GM10248 (cell line): ENCODE measurements at regions of chr3 and their contacts with region 1.

Region 1: DNA sequence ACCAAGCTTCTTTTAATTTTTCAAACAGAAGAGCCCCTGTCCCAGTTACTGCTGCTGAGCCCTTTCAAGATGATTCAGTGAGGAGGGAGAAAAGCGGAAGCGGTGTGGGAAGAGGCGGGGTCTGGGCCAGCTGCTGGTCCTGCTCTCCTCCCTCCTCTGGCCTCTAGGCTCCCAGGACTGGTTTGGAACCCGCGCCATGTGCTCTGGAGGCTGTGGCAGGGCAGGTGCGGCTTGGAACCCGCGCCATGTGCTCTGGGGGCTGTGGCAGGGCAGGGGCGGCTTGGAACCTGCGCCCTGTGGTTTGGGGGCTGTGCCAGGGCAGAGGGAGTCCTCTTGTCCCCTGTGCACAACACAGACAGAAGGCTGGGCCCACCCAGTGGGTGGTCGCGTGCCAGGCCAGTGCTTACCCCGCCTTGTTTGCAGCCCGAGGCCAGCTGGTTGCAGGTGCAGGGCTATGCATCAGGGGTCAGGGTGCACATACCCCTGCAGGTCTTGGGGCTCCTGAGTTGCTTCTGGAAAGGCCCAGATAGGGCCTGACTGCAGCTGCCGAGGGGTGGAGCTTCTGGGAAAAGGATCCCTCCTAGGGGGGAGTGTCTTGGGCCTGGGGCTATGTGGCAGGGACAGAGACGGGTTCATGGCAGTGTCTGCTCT is 12.2 kb downstream of the ALG1L2 start:
- DNase-seq: peak; percentile 54
- CTCF ChIP-seq: no peak

Region 2: DNA sequence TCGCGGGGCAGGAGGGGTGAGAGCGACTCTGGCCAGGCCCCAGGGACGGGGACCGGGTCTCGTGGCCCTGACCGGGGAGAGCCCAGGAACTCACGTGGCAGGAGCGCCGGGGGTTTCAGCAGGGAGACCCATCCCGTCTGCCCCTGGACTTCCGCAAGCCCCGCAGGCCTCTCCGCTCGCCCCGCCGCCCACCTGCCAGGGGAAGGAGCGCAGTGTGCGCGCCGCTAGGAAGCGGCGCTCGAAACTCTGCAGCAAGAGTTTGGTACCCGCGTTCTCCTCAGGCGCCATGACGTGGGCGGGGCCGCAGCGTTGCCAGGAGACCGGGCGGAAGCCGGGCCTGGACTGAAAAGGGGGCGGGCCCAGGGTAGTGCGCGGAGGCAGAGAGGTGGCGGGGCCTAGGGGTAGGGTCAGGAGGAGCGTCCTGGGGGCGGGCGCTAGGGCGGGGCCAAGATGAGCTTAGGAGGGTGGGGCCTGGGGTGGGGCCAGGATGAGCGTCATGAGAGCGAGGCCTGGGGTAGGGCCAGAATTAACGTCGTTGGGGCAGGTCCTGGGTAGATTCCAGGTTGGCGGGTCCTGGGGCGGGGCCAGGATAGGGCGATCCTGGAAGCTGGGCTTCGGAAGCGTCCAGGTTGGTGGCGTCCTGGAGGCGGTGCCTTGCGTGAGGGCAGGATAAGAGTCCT is 17.5 kb after region 1 on chr3:
- CTCF ChIA-PET with region 1: interaction called, 46 read pairs
- POLR2A ChIA-PET with region 1: no interaction called
- DNase-seq: peak; percentile 90
- CTCF ChIP-seq: no peak